Activated CD4-positive, alpha-beta T cell treated with anti-CD3 and anti-CD28 coated beads for 36 hours (primary cell): ENCODE measurements at regions of chr15 and their contacts with region 1.

Region 1: GRCh38 chr15:27514526-27514925 is 543.5 kb downstream of the GABRG3 start:
- DNase-seq: no peak
- ATAC-seq: no peak
- H3K4me3 Mint-ChIP-seq: no peak overlapping the region
- H3K27ac Mint-ChIP-seq: no peak overlapping the region
- H3K4me1 Mint-ChIP-seq: no peaks in the 10 kb centered on the region
- H3K27me3 Mint-ChIP-seq: peaks cover 4% of the 10 kb centered on the region

Region 2: GRCh38 chr15:26477044-26477443 is 1037.5 kb before region 1 on chr15:
- CTCF ChIA-PET with region 1: no interaction called
- POLR2A ChIA-PET with region 1: no interaction called
- intact Hi-C with region 1: no loop called
- DNase-seq: no peak
- ATAC-seq: no peak
- H3K4me3 Mint-ChIP-seq: no peak overlapping the region
- H3K27ac Mint-ChIP-seq: no peak overlapping the region
- H3K4me1 Mint-ChIP-seq: no peaks in the 10 kb centered on the region
- H3K27me3 Mint-ChIP-seq: no peaks in the 10 kb centered on the region

Region 3: DNA sequence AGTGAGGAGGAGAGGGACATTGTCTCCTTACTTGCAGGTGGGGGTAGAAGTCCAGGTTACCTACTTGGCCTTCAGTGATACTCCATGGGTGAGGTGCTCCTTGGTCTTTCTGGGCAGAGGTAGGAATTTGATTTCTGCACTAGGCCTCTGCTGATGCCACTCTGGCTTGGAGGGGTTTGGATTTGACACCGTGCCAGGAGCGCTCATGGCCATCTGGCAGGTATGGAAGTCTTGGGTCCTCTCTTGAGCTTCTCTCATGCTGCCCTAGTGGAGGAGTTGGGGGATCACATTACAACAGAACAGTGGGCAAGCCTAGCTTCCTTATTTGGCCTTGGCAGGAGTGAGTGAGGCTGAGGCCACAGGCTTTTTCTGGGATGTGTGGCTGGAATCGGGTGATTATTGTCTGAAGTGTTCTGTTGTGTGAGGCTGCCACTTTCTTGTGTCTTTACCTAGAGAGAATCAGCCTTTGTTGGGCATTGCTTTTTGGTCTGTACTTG is 18.5 kb before region 1 on chr15:
- CTCF ChIA-PET with region 1: no interaction called
- POLR2A ChIA-PET with region 1: no interaction called
- intact Hi-C with region 1: loop called in 1 of 2 experiments (anchors 2 kb)
- DNase-seq: no peak
- ATAC-seq: no peak
- H3K4me3 Mint-ChIP-seq: no peak overlapping the region
- H3K27ac Mint-ChIP-seq: no peak overlapping the region
- H3K4me1 Mint-ChIP-seq: no peaks in the 10 kb centered on the region
- H3K27me3 Mint-ChIP-seq: no peaks in the 10 kb centered on the region

Region 4: DNA sequence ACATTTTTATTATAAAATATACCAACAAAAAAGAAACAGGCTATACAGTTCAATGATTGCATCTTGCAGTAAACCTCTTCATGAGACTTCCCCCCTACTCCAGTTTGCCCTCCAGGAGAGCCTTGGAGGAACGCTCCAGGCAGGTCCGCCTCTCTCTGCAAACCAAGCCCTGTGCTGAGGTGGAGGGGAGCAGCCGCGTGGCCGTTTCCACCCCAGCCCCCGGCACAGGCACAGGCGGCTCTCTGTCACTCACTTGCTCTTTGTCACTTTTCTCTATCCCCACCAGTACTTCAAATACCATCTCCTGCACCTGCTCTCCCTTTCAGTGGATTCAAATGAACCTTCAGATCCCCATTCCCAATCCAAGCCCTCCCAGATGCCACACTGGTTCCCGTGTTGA is 104.7 kb after region 1 on chr15:
- CTCF ChIA-PET with region 1: no interaction called
- POLR2A ChIA-PET with region 1: no interaction called
- intact Hi-C with region 1: no loop called
- DNase-seq: no peak
- ATAC-seq: no peak
- H3K4me3 Mint-ChIP-seq: no peak overlapping the region
- H3K27ac Mint-ChIP-seq: no peak overlapping the region
- H3K4me1 Mint-ChIP-seq: no peaks in the 10 kb centered on the region
- H3K27me3 Mint-ChIP-seq: no peaks in the 10 kb centered on the region